WTC11 (cell line): ENCODE measurements at regions of chr9 and their contacts with region 1.

Region 1: GRCh38 chr9:35116898-35117551 is 1.4 kb upstream of the ATOSB start:
- DNase-seq: peak; percentile 92
- ATAC-seq: peak; percentile 34
- H3K4me3 Mint-ChIP-seq: peak overlapping the region; percentile 98
- H3K27ac Mint-ChIP-seq: peak overlapping the region; percentile 96
- H3K4me1 Mint-ChIP-seq: peaks cover 28% of the 10 kb centered on the region
- H3K27me3 Mint-ChIP-seq: no peaks in the 10 kb centered on the region
- CTCF ChIP-seq: peak; percentile 69

Region 2: DNA sequence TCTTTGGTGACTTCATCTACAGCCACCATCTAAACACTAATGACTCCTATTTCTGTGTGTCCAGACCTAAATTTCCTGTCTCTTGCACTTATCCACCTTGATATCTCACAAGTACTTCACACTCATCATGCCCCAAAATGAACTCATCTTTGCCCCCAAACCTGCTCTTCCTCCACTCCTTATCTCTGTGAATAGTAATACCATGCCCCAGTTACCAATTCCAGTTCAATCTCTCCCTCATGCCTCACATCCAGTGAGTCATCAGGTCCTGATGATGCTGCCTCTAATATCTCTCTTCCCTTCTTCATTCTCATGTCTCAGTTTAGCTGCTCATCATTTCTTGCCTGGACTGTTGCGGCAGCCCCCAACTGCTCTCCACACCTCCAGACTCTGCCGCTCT is 142.4 kb before region 1 on chr9:
- CTCF ChIA-PET with region 1: no interaction called
- POLR2A ChIA-PET with region 1: no interaction called
- DNase-seq: no peak
- ATAC-seq: no peak
- H3K4me3 Mint-ChIP-seq: no peak overlapping the region
- H3K27ac Mint-ChIP-seq: no peak overlapping the region
- H3K4me1 Mint-ChIP-seq: peaks cover 12% of the 10 kb centered on the region
- H3K27me3 Mint-ChIP-seq: no peaks in the 10 kb centered on the region
- CTCF ChIP-seq: no peak

Region 3: DNA sequence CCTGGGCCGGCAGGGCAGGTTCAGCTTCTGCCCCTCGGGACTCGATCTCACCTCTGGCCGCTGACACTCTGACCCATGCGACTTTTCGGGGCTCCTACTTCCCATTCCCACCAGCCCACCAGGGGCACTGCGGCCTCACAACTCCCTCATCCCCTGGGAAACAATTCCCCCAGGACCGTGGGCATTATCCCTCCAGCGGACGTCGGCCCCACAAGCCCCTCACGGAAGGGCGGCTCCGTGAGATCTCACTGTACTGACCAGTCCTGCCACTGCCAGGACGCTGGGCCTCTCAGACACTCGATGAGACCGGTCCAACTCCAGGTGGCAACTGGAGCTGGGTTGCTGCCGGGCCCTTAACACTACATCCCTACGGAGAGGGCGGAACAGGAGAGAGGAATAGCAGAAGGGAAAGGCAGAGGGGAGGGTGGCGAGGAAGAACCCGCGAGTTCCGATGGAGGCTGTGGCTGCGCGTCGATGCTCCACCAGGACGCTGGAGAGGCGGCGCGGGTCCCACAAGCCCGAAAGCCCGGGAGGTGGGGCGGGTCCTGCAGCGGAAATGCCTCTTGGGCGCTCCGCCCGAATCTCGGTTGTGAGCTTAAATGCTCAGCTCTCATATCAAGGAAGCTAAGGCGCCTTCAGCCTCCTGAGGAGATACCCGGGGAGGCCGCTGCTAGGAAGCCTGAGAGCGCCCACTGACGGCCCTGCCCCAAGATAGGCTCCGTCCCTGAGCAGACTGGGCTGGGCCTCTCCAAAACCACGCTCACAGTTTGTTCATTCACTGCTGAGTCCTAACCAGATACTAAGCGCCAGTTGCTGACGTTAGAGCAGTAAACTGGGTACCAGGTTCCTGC is 80.9 kb before region 1 on chr9:
- CTCF ChIA-PET with region 1: no interaction called
- POLR2A ChIA-PET with region 1: no interaction called
- DNase-seq: peak; percentile 34
- ATAC-seq: peak; percentile 76
- H3K4me3 Mint-ChIP-seq: peak overlapping the region; percentile 33
- H3K27ac Mint-ChIP-seq: no peak overlapping the region
- H3K4me1 Mint-ChIP-seq: peaks cover 10% of the 10 kb centered on the region
- H3K27me3 Mint-ChIP-seq: no peaks in the 10 kb centered on the region
- CTCF ChIP-seq: no peak

Region 4: GRCh38 chr9:35102926-35103659 is 13.9 kb before region 1 on chr9 and contains the start of gene STOML2:
- CTCF ChIA-PET with region 1: interaction called, 28 read pairs
- POLR2A ChIA-PET with region 1: interaction called, 16 read pairs
- DNase-seq: peak; percentile 91
- ATAC-seq: peak; percentile 95
- H3K4me3 Mint-ChIP-seq: peak within 1 kb of the TSS; percentile 96
- H3K27ac Mint-ChIP-seq: peak within 1 kb of the TSS; percentile 99
- H3K4me1 Mint-ChIP-seq: peaks cover 16% of the 10 kb centered on the region
- H3K27me3 Mint-ChIP-seq: no peaks in the 10 kb centered on the region
- CTCF ChIP-seq: no peak
- total RNA-seq, gene STOML2: 208 to 214 TPM (median 210 TPM) in 3 replicates

Region 5: GRCh38 chr9:35258676-35259474 is 141.8 kb after region 1 on chr9:
- CTCF ChIA-PET with region 1: interaction called, 77 read pairs
- POLR2A ChIA-PET with region 1: no interaction called
- DNase-seq: peak; percentile 64
- ATAC-seq: peak; percentile 58
- H3K4me3 Mint-ChIP-seq: no peak overlapping the region
- H3K27ac Mint-ChIP-seq: no peak overlapping the region
- H3K4me1 Mint-ChIP-seq: peaks cover 12% of the 10 kb centered on the region
- H3K27me3 Mint-ChIP-seq: no peaks in the 10 kb centered on the region
- CTCF ChIP-seq: peak; percentile 29; the same call in 1 of the 2 replicates

Region 6: DNA sequence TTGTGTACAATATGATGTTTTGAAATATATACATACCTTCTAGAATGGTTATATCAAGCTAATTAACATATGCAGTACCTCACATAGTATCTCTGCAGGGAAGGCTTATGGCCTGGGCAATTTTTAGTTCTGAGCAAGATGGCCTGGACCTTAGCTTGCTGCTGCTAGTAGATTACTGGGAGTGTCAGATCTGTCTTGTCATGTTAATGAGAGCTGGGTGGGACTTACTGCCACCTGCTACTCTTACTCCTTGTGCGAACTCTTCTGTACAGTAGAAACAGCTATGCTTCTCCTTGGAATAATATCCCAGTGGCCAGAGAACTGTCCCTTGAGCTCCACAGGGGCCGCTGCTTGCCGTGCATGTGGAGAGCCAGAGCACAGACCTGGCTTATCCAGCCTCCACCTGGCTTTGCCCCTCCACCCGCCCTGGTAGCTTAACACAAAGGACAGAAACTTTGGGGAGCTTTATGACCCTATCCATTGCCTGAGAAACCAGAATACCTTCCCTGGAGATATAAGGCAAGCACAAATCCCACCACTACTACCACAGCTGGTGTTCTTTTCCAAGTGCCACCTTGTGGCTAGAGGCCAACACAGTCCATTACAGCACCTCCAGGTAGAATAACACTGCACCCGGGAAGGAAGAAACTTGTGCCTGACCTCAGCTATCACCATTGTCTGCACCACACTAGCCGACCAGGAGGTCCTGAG is 298.5 kb after region 1 on chr9:
- CTCF ChIA-PET with region 1: interaction called, 25 read pairs
- POLR2A ChIA-PET with region 1: no interaction called
- DNase-seq: peak; percentile 23
- ATAC-seq: peak; percentile 98
- H3K4me3 Mint-ChIP-seq: no peak overlapping the region
- H3K27ac Mint-ChIP-seq: no peak overlapping the region
- H3K4me1 Mint-ChIP-seq: peaks cover 15% of the 10 kb centered on the region
- H3K27me3 Mint-ChIP-seq: peaks cover 1% of the 10 kb centered on the region
- CTCF ChIP-seq: no peak

Region 7: GRCh38 chr9:35464141-35465025 is 347.4 kb after region 1 on chr9:
- CTCF ChIA-PET with region 1: no interaction called
- POLR2A ChIA-PET with region 1: no interaction called
- DNase-seq: no peak
- ATAC-seq: no peak
- H3K4me3 Mint-ChIP-seq: no peak overlapping the region
- H3K27ac Mint-ChIP-seq: no peak overlapping the region
- H3K4me1 Mint-ChIP-seq: no peaks in the 10 kb centered on the region
- H3K27me3 Mint-ChIP-seq: peaks cover 24% of the 10 kb centered on the region
- CTCF ChIP-seq: no peak